Ascending aorta (tissue), 2 donors: ENCODE measurements at regions of chr4 and their contacts with region 1.

Region 1: GRCh38 chr4:75745161-75745560 is 20.8 kb downstream of the USO1 start:
- DNase-seq: no peak
- H3K4me3 ChIP-seq: no peak overlapping the region
- H3K27ac ChIP-seq: peak overlapping the region; percentile 6 to 7
- H3K4me1 ChIP-seq: peaks cover 0 to 4% of the 10 kb centered on the region in 2 donors
- H3K27me3 ChIP-seq: no peaks in the 10 kb centered on the region
- CTCF ChIP-seq: no peak

Region 2: GRCh38 chr4:75565481-75565880 is 179.7 kb before region 1 on chr4:
- intact Hi-C with region 1: no loop called
- DNase-seq: no peak
- H3K4me3 ChIP-seq: no peak overlapping the region
- H3K27ac ChIP-seq: no peak overlapping the region
- H3K4me1 ChIP-seq: no peaks in the 10 kb centered on the region
- H3K27me3 ChIP-seq: no peaks in the 10 kb centered on the region
- CTCF ChIP-seq: no peak

Region 3: GRCh38 chr4:75729836-75730235 is 15.3 kb before region 1 on chr4:
- intact Hi-C with region 1: loop called (anchors 2 kb)
- DNase-seq: no peak
- H3K4me3 ChIP-seq: peak overlapping the region; percentile 14 to 84
- H3K27ac ChIP-seq: peak overlapping the region in 1 of 2 donors; percentile 97
- H3K4me1 ChIP-seq: peaks cover 0 to 18% of the 10 kb centered on the region in 2 donors
- H3K27me3 ChIP-seq: no peaks in the 10 kb centered on the region
- CTCF ChIP-seq: no peak